ENCODE measurements at regions of chr17 and their contacts with region 1.

Region 1: DNA sequence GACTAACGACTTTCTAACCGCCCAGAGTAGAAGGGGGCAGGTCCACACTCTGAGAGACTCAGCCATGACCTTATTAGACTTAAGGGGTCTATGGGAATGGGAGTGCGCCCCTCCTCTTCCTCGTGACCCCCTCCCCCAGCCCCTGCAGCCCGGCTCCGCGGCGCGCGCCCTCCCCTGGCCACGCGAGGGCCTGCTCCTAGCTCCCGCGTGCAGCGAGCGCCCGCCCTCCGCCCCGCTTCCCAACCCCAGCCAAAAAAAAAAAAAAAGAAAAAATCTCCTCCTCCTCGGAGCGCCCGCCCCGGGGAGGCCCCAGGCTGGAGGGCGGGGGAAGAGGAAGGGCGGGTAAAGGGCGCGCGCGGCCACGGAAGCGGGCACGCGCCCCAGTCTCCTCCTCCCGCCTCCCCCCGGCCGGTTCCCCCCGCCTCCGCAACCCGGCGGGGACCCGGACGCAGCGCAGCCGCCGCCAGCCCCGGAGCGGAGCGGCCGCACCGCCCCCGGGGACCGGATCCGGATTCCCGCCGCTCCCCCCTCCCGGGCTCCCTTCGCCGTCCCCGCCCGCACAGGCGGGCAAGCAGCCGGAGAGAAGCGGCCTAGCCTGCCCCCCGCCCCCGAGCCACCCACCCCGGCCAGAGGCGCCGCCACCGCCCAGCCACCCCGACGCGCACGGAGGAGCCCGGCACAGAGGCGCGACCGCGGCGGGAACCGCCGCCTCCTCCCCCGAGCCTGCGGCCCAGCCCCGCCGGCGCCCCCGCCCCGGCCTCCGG is 949 bp downstream of the UBTF start:
- DNase-seq: peak; percentile 87
- H3K4me3 Mint-ChIP-seq: peak overlapping the region; percentile 88
- H3K27ac Mint-ChIP-seq: peak overlapping the region; percentile 92
- H3K4me1 Mint-ChIP-seq: peaks cover 46% of the 10 kb centered on the region
- H3K27me3 Mint-ChIP-seq: no peaks in the 10 kb centered on the region

Region 2: DNA sequence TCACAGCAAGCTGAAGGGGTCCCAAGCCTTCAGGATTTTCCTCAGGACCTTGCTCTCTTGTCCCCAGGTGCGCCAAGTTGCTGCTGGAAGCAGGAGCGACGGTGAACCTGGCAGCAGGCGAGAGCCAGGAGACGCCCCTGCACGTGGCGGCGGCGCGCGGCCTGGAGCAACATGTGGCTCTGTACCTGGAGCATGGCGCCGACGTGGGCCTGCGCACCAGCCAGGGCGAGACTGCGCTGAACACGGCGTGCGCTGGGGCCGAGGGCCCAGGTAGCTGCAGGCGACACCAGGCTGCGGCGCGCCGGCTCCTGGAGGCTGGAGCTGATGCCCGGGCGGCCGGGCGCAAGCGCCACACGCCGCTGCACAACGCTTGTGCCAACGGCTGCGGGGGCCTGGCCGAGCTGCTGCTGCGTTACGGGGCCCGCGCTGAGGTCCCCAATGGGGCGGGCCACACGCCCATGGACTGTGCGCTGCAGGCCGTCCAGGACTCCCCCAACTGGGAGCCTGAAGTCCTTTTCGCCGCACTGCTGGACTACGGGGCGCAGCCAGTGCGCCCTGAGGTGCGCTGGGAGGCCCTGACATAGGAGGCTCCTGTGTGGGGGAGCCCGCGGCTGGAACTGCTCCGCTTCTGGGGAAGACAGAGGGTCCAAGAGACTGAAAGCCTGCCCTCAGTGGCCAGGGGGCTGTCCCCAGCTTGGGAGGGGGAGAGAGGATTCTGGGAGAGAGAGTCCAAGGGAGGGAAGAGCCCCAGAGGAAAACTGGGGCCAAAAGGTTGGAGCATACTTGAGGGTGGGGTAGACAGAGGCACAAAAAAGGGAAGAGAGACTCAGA is 41.6 kb before region 1 on chr17:
- CTCF ChIA-PET with region 1: no interaction called
- POLR2A ChIA-PET with region 1: no interaction called
- DNase-seq: no peak
- H3K4me3 Mint-ChIP-seq: no peak overlapping the region
- H3K27ac Mint-ChIP-seq: no peak overlapping the region
- H3K4me1 Mint-ChIP-seq: peaks cover 3% of the 10 kb centered on the region
- H3K27me3 Mint-ChIP-seq: no peaks in the 10 kb centered on the region

Region 3: GRCh38 chr17:44199553-44200477 is 18.7 kb before region 1 on chr17 and contains the start of gene ATXN7L3:
- CTCF ChIA-PET with region 1: interaction called, 15 read pairs
- POLR2A ChIA-PET with region 1: interaction called, 6 read pairs
- DNase-seq: peak; percentile 100
- H3K4me3 Mint-ChIP-seq: peak within 1 kb of the TSS; percentile 92
- H3K27ac Mint-ChIP-seq: peak within 1 kb of the TSS; percentile 96
- H3K4me1 Mint-ChIP-seq: peaks cover 63% of the 10 kb centered on the region
- H3K27me3 Mint-ChIP-seq: no peaks in the 10 kb centered on the region
- total RNA-seq, gene ATXN7L3: 110 to 112 TPM

Measured in activated CD4-positive, alpha-beta T cell treated with anti-CD3 and anti-CD28 coated beads, Interleukin-2, amount 10 ng/mL, durations not matched to agents 7 days and 5 days (primary cell).